PC-9 (cell line): ENCODE measurements at regions of chr19 and their contacts with region 1.

Region 1: DNA sequence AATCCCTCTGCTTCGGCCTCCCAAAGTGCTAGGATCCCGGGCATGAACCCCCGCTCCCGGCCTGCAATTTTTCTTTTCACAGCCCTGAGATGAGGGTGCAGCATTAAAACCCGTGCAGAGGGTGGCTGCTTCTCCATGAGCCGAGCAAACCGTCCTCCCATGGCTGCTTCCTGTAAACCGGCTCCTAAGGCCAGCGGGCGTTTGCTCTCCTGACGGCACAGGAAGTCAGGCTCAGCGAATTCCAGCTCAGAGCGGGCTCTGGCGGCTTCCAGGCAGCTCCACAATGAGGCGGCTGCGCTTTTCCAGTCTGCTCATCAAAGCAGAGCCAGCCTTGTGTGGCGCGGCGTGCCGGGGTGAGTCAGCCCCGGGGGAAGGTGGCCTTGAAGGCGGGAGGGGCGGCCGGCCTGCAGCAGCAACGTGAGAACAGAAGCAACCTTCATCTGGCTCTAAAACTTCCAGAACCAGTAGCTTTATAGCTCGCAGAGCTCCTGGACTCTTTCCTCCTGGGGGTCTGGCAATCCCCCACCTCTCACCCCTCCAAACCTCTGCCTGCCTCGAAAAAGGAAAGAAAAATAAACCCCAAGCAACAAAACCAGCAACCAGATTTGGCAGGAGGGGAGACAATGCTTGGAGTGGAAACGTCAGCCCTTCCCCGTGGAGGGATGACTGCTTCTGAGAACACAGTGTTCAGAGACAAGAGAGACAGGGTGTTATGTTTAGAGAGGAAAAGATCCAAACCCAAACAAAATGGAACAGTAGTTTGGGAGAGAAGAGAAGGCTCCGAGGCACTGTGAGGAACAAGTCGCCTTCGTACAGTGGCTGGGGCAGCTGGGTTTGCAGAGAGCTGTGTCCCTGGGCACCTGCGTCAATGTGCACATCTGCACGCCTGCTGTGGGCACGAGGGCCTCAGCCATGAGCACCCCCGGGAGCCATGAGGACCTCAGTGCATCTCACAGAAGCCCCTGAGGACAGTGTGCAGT is 67.8 kb downstream of the GADD45B start:
- DNase-seq: peak; percentile 91
- H3K4me3 ChIP-seq: peak overlapping the region; percentile 42; the same call in 1 of the 2 replicates
- H3K27ac ChIP-seq: peak overlapping the region; percentile 98
- H3K4me1 ChIP-seq: peaks cover 47% of the 10 kb centered on the region
- H3K27me3 ChIP-seq: no peaks in the 10 kb centered on the region
- CTCF ChIP-seq: no peak

Region 2: DNA sequence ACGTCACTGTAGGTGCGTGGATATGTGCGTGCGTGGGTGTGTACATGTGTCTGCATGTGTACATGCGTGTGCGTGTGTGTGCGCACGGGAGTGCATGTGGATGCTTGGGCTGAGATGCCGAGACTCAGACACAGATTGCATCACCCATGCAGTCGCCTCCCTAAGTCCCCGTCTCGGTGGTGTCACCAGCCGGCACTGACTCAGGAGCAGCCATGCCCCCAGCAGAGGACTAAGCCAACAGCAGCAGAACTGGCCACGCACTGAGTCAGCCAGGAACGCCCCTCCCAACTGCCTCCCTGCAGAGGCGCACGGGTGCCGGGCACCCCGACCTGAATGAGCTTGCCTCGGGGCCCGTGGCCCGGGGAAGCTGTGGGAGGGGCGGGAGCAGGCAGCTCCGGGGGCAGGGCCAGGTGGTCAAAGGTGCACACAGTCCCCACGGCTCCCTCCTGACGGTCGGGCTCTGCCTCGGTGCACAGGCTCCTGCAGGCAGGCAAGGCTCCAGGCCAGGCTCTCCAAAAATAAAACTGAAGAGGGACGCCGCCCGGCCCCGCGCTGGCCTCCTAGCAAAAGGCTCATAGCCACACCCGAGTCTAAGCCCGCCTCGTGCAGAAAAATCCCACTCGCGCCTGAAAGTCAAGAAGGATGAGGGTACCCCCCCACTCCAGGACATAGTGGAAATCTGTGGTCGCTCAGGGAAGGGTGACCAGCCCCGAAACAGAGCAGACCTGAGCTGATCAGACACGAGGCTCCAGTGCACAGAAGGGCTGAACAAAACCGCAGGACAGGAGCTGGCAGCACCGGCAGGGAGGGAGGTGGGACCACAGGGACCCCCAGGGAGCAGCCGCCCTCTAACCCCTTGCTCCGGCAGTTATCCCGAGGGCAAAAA is 18.7 kb before region 1 on chr19:
- CTCF ChIA-PET with region 1: no interaction called
- POLR2A ChIA-PET with region 1: interaction called, 10 read pairs
- intact Hi-C with region 1: loop called (anchors 1 kb)
- DNase-seq: peak; percentile 88 to 93
- H3K4me3 ChIP-seq: peak overlapping the region; percentile 50
- H3K27ac ChIP-seq: peak overlapping the region; percentile 88
- H3K4me1 ChIP-seq: peaks cover 41% of the 10 kb centered on the region
- H3K27me3 ChIP-seq: no peaks in the 10 kb centered on the region
- CTCF ChIP-seq: no peak

Region 3: GRCh38 chr19:2578901-2579677 is 35.3 kb after region 1 on chr19:
- CTCF ChIA-PET with region 1: interaction called, 10 read pairs
- POLR2A ChIA-PET with region 1: interaction called, 10 read pairs
- intact Hi-C with region 1: loop called (anchors 1 kb)
- DNase-seq: peak; percentile 86 to 93
- H3K4me3 ChIP-seq: peak overlapping the region; percentile 51; the same call in 1 of the 2 replicates
- H3K27ac ChIP-seq: peak overlapping the region; percentile 90
- H3K4me1 ChIP-seq: peaks cover 21% of the 10 kb centered on the region
- H3K27me3 ChIP-seq: no peaks in the 10 kb centered on the region
- CTCF ChIP-seq: peak; percentile 87

Region 4: DNA sequence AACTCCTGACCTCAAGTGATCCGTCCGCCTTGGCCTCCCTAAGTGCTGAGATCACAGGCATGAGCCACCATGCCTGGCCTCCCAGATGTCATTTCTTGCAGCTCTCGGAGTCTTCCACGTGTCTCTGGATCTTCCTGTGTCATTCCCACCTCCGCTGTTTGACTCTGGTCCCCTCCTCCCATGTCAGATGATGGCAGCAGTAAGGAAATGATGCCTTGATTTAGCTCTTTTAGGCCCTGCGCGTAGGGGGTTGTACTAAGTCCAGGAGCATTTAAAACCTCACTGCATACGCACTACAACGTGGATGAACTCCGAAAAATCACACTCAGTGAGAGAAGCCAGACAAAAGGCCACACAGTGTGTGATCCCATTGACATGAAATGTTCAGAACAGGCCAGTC is 45.7 kb after region 1 on chr19:
- CTCF ChIA-PET with region 1: no interaction called
- POLR2A ChIA-PET with region 1: no interaction called
- intact Hi-C with region 1: no loop called
- DNase-seq: no peak
- H3K4me3 ChIP-seq: no peak overlapping the region
- H3K27ac ChIP-seq: no peak overlapping the region
- H3K4me1 ChIP-seq: no peaks in the 10 kb centered on the region
- H3K27me3 ChIP-seq: no peaks in the 10 kb centered on the region
- CTCF ChIP-seq: no peak

Region 5: GRCh38 chr19:2610637-2611482 is 67.1 kb after region 1 on chr19:
- CTCF ChIA-PET with region 1: no interaction called
- POLR2A ChIA-PET with region 1: no interaction called
- intact Hi-C with region 1: loop called (anchors 5 kb)
- DNase-seq: peak; percentile 60 to 85
- H3K4me3 ChIP-seq: no peak overlapping the region; the same call in 1 of the 2 replicates
- H3K27ac ChIP-seq: no peak overlapping the region
- H3K4me1 ChIP-seq: no peaks in the 10 kb centered on the region
- H3K27me3 ChIP-seq: no peaks in the 10 kb centered on the region
- CTCF ChIP-seq: peak; percentile 86